Ascending aorta (tissue), 2 donors: ENCODE measurements at regions of chr16 and their contacts with region 1.

Region 1: GRCh38 chr16:57300387-57301125 is 16.1 kb upstream of the PLLP start:
- DNase-seq: peak; percentile 99 to 100
- H3K4me3 ChIP-seq: peak overlapping the region; percentile 50 to 66
- H3K27ac ChIP-seq: peak overlapping the region; percentile 94 to 95
- H3K4me1 ChIP-seq: peaks cover 7 to 15% of the 10 kb centered on the region in 2 donors
- H3K27me3 ChIP-seq: no peaks in the 10 kb centered on the region
- CTCF ChIP-seq: peak; percentile 93 to 99 (median 93)

Region 2: GRCh38 chr16:56931892-56932720 is 368.4 kb before region 1 on chr16 and contains the start of gene HERPUD1:
- intact Hi-C with region 1: loop called (anchors 10 kb)
- DNase-seq: peak; percentile 92 to 99
- H3K4me3 ChIP-seq: peak within 1 kb of the TSS; percentile 99 to 100
- H3K27ac ChIP-seq: peak within 1 kb of the TSS; percentile 99 to 100
- H3K4me1 ChIP-seq: peaks cover 12 to 17% of the 10 kb centered on the region in 2 donors
- H3K27me3 ChIP-seq: no peaks in the 10 kb centered on the region
- CTCF ChIP-seq: peak in 2 of 3 experiments; percentile 5 to 14
- total RNA-seq, gene HERPUD1: 108 TPM

Region 3: DNA sequence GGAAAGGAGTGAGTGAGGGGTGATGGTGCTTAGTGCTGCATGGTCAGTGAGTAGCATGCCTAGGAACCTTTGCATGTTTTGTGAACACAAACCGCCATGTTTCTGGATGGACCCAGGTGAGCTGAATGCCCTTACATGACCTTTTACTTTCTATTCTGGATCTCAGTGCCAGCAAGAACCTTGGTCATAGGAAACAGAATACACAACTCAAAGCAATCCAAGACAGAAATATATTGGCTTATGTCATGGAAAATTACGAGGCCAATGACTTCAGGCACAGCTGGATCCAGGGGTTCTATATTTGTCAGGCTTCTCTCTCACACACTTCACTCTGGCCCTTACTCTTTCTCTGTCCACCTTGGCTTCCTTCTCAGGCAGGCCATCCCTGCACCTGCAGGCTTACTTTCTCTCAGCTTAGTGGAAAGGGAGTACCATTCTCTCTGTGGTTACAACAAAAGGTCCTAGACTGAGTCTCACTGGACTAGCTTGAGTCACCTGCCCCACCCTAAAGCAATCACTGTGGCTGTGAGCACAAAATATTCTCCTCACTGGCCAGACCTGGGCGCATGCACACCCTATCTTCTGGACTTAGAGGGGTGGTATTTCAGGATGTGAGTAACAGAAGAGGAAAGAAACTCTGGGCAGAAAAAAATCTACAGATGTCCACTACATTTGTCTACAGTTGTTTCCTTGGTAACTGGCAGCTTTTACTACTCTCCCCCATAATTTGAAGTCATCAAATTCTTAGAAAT is 228.5 kb before region 1 on chr16:
- intact Hi-C with region 1: no loop called
- DNase-seq: no peak
- H3K4me3 ChIP-seq: no peak overlapping the region
- H3K27ac ChIP-seq: no peak overlapping the region
- H3K4me1 ChIP-seq: no peaks in the 10 kb centered on the region
- H3K27me3 ChIP-seq: no peaks in the 10 kb centered on the region
- CTCF ChIP-seq: no peak

Region 4: DNA sequence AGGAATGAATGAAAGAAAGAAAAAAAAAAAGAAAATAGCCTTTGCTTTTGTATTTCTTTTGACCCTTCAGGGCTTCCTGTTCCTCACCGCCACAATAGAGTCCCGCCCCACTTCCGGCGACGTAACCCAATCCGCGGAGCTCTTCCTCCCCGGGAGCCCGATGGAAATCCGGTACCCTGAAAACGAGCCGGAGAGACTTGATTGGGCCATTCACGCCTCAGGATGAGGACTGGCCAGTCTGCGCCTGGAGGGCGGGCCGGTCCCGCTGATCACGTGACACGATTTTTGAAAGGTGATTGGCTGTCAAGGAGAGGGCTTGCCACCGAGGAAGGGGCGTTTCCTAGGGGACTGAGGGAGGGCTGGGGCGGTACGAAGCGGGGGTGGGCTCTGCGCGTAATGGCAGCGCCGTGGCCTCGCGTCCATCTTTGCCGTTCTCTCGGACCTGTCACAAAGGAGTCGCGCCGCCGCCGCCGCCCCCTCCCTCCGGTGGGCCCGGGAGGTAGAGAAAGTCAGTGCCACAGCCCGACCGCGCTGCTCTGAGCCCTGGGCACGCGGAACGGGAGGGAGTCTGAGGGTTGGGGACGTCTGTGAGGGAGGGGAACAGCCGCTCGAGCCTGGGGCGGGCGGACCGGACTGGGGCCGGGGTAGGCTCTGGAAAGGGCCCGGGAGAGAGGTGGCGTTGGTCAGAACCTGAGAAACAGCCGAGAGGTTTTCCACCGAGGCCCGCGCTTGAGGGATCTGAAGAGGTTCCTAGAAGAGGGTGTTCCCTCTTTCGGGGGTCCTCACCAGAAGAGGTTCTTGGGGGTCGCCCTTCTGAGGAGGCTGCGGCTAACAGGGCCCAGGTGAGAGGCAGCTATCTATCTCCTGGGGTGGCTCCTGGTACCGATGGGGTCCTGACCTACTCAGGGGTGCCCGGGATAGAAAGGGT is 114.3 kb before region 1 on chr16 and contains the starts of genes PSME3IP1 and RSPRY1:
- intact Hi-C with region 1: loop called (anchors 5 kb)
- DNase-seq: peak; percentile 98 to 99
- H3K4me3 ChIP-seq: peak within 1 kb of the TSS; percentile 78 to 94
- H3K27ac ChIP-seq: peak within 1 kb of the TSS; percentile 95 to 96
- H3K4me1 ChIP-seq: peaks cover 5 to 33% of the 10 kb centered on the region in 2 donors
- H3K27me3 ChIP-seq: no peaks in the 10 kb centered on the region
- CTCF ChIP-seq: no peak
- total RNA-seq, gene PSME3IP1: 32.6 TPM
- total RNA-seq, gene RSPRY1: 29.3 TPM

Region 5: GRCh38 chr16:57316390-57317017 is 15.9 kb after region 1 on chr16:
- intact Hi-C with region 1: loop called (anchors 1 kb)
- DNase-seq: peak; percentile 60 to 90
- H3K4me3 ChIP-seq: no peak overlapping the region
- H3K27ac ChIP-seq: peak overlapping the region; percentile 91 to 96
- H3K4me1 ChIP-seq: peaks cover 21 to 41% of the 10 kb centered on the region in 2 donors
- H3K27me3 ChIP-seq: no peaks in the 10 kb centered on the region
- CTCF ChIP-seq: no peak

Region 6: DNA sequence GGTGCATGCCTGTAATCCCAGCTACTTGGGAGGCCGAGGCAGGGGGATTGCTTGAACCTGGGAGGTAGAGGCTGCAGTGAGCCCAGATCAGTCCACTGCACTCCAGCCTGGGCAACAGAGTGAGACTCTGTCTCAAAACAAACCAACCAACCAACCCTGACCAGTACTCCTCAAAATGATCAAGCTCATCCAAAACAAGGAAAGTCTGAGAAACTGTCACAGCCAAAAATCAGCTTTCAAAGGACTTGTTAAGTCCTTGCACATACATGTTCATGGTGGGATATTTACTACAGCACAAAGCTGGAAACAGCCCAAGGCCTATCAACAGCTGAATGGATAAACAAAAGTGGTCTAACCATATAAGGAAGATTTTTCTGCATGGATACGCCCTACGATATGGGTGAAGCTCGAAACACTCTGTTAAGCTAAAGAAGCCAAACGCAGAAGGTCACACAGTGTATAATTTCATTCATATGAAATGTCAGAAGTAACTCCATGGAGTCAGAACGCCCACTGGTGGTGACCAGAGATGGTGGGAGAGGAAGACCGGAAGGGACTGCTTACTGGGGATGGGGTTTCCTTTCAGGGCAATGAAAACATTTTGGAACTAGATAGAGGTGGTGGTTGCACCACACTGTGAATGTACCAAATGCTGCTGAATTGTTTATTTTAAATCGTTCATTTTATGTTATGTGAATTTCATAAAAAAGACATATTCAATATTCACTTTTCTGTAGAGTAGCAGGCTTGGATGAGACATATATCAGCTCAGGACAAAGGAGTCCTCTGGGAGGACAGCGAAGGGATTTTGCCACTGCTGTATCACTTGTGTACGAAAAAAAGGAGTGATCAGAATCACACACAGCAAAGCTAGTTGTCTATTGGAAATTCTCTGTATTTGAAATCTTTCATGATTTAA is 121.7 kb after region 1 on chr16:
- intact Hi-C with region 1: loop called (anchors 1 kb)
- DNase-seq: peak in 1 of 2 donors; percentile 83
- H3K4me3 ChIP-seq: no peak overlapping the region
- H3K27ac ChIP-seq: peak overlapping the region; percentile 28 to 58
- H3K4me1 ChIP-seq: peaks cover 0 to 24% of the 10 kb centered on the region in 2 donors
- H3K27me3 ChIP-seq: no peaks in the 10 kb centered on the region
- CTCF ChIP-seq: peak; percentile 71 to 87 (median 79)

Region 7: GRCh38 chr16:57802341-57803133 is 502.0 kb after region 1 on chr16 and contains the start of gene KIFC3:
- intact Hi-C with region 1: loop called (anchors 5 kb)
- DNase-seq: peak; percentile 50 to 95
- H3K4me3 ChIP-seq: peak within 1 kb of the TSS; percentile 68 to 84
- H3K27ac ChIP-seq: peak within 1 kb of the TSS; percentile 81 to 85
- H3K4me1 ChIP-seq: peaks cover 3 to 28% of the 10 kb centered on the region in 2 donors
- H3K27me3 ChIP-seq: no peaks in the 10 kb centered on the region
- CTCF ChIP-seq: peak in 2 of 3 experiments; percentile 3 to 76
- total RNA-seq, gene KIFC3: 54.9 TPM